Activated CD4-positive, alpha-beta T cell treated with anti-CD3 and anti-CD28 coated beads for 36 hours (primary cell): ENCODE measurements at regions of chr16 and their contacts with region 1.

Region 1: DNA sequence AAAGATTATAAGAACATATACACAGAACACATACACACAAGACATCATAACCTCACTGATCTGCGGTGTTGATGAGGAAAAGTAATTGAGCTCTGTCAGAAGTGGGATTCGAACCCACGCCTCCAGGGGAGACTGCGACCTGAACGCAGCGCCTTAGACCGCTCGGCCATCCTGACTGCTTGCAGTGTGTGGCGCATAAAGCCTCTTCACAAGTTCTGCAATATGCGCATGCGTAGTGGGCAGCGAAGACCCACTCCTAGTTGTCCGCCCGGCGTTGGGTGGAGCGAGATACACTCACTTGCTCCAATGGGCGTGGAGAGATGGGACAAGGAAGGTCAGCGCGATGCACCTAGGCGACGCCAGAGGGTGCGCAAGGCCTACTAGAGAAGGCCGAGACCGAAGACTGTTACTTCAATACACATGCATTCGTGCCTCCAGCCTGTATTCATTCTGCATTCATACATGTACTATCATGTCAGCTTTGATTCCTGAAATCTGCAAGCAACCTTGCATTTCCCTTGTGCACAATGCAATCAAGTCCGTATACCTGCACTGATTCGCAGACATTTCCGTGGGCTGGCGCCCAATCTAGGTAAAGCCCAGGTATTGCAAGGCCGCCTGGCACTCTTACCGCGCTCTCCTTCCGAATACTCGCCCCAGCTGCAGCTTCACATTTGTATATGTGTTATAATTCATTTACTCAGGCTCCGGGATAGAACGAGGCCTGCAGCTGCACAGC is 16.1 kb upstream of the PLLP start:
- DNase-seq: peak; percentile 99
- ATAC-seq: peak; percentile 89
- H3K4me3 Mint-ChIP-seq: no peak overlapping the region
- H3K27ac Mint-ChIP-seq: no peak overlapping the region
- H3K4me1 Mint-ChIP-seq: peaks cover 3% of the 10 kb centered on the region
- H3K27me3 Mint-ChIP-seq: no peaks in the 10 kb centered on the region

Region 2: GRCh38 chr16:57084257-57084770 is 216.2 kb before region 1 on chr16:
- CTCF ChIA-PET with region 1: interaction called, 6 read pairs
- POLR2A ChIA-PET with region 1: no interaction called
- intact Hi-C with region 1: loop called in 1 of 2 experiments (anchors 1 kb)
- DNase-seq: peak; percentile 86
- ATAC-seq: peak; percentile 83
- H3K4me3 Mint-ChIP-seq: no peak overlapping the region
- H3K27ac Mint-ChIP-seq: peak overlapping the region; percentile 49
- H3K4me1 Mint-ChIP-seq: peaks cover 8% of the 10 kb centered on the region
- H3K27me3 Mint-ChIP-seq: no peaks in the 10 kb centered on the region

Region 3: DNA sequence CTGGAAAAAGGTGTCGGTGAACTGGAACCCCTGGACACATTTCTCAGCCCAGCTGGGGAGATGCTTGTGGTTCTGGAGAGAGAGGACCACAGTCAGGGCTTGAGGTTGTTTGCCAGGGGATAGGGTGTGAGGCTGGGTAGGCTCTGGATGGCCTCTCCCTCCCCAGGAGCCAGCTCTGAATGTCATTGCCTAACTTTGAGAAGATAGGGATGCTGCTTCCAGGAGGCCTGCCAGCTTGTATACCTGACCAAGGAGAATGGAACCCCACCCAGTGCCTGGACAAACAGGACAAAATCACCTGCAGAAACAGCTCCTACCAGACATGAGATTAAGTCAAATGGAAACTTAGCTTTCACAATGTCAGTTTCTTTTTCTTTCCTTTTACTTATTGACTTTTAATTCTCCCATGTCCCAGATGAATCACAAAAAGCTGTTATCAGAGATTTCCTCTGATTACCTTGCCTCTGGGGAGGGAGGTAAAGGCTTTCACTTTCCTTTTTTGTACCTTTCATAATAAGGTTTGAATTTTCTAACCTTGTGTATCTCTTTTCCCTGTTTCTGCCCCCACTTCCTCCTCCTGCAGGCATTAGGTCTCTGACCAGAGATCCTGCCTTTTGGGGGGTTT is 13.7 kb after region 1 on chr16:
- CTCF ChIA-PET with region 1: interaction called, 11 read pairs
- POLR2A ChIA-PET with region 1: no interaction called
- intact Hi-C with region 1: loop called in 1 of 2 experiments (anchors 1 kb)
- DNase-seq: peak; percentile 23
- ATAC-seq: peak; percentile 90
- H3K4me3 Mint-ChIP-seq: no peak overlapping the region
- H3K27ac Mint-ChIP-seq: peak overlapping the region; percentile 33
- H3K4me1 Mint-ChIP-seq: peaks cover 17% of the 10 kb centered on the region
- H3K27me3 Mint-ChIP-seq: no peaks in the 10 kb centered on the region

Region 4: DNA sequence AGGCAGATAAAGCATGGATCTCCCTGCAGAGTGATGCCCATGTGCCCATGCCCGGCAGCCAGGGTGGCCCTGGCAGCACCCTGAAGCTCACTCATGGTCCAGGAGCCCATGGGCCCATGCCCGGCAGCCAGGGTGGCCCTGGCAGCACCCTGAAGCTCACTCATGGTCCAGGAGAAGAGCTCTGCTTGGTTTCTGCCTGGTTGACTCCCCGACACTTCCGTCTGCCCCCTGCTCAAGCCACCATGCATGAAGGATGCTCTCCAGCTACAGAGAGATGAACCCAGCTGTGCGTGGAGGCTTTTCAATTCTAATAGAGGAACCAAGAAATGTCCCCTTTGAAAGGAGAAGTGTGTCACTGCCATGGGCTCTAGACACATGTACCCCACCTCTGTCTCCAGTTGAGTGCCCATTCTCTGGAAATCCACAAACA is 112.8 kb after region 1 on chr16:
- CTCF ChIA-PET with region 1: interaction called, 129 read pairs
- POLR2A ChIA-PET with region 1: interaction called, 4 read pairs
- intact Hi-C with region 1: loop called (anchors 1 kb)
- DNase-seq: no peak
- ATAC-seq: no peak
- H3K4me3 Mint-ChIP-seq: no peak overlapping the region
- H3K27ac Mint-ChIP-seq: no peak overlapping the region
- H3K4me1 Mint-ChIP-seq: peaks cover 10% of the 10 kb centered on the region
- H3K27me3 Mint-ChIP-seq: no peaks in the 10 kb centered on the region

Region 5: GRCh38 chr16:57447186-57447962 is 146.8 kb after region 1 on chr16 and contains the starts of genes CIAPIN1 and COQ9:
- CTCF ChIA-PET with region 1: interaction called, 6 read pairs
- POLR2A ChIA-PET with region 1: interaction called, 4 read pairs
- intact Hi-C with region 1: loop called (anchors 1 kb)
- DNase-seq: peak; percentile 96
- ATAC-seq: peak; percentile 99
- H3K4me3 Mint-ChIP-seq: peak within 1 kb of the TSS; percentile 91
- H3K27ac Mint-ChIP-seq: peak within 1 kb of the TSS; percentile 85
- H3K4me1 Mint-ChIP-seq: peaks cover 32% of the 10 kb centered on the region
- H3K27me3 Mint-ChIP-seq: no peaks in the 10 kb centered on the region
- total RNA-seq, gene CIAPIN1: 41.7 to 42.6 TPM
- total RNA-seq, gene COQ9: 39.4 to 52.1 TPM

Region 6: GRCh38 chr16:57485916-57486857 is 185.6 kb after region 1 on chr16 and contains the start of gene DOK4:
- CTCF ChIA-PET with region 1: no interaction called
- POLR2A ChIA-PET with region 1: no interaction called
- intact Hi-C with region 1: loop called in 1 of 2 experiments (anchors 1 kb)
- DNase-seq: peak; percentile 89
- ATAC-seq: peak; percentile 93
- H3K4me3 Mint-ChIP-seq: peak within 1 kb of the TSS; percentile 75
- H3K27ac Mint-ChIP-seq: peak within 1 kb of the TSS; percentile 71
- H3K4me1 Mint-ChIP-seq: peaks cover 22% of the 10 kb centered on the region
- H3K27me3 Mint-ChIP-seq: no peaks in the 10 kb centered on the region
- total RNA-seq, gene DOK4: 5.7 to 6.7 TPM